H1 (cell line): ENCODE measurements at regions of chr12 and their contacts with region 1.

Region 1: DNA sequence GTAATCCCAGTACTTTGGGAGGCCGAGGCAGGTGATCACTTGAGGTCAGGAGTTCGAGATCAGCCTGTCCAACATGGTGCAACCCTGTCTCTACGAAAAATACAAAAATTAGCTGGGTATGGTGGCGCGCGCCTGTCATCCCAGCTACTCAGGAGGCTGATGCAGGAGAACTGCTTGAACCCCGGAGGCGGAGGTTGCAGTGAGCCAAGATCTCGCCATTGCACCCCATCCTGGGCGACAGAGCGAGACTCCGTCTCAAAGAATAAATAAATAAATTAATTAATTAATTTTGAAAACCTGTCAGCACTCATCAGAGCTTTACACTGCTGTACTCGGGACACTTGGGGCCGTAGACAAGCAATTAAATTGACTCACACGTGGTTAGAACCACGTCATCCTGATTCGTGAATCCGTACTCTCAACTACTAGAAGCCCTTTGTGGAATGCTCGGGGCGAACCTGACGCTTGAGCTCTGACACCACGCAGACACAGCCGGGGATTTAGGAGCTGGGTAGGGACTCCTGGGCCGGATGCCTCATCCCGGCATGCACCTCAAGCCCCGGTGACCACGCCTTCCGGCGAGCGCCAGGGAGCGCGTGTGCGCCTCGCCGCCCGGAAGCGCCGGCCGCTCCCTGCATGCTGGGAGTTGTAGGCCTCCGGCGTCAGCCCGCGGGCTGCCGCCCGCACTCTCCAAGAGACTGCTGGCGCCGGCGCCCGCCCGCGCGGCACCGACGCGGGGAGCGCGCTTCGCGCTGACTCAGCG is at the start of gene XPOT:
- DNase-seq: peak; percentile 87 to 95
- H3K4me3 ChIP-seq: peak within 1 kb of the TSS; percentile 73 to 96 (median 89)
- H3K27ac ChIP-seq: peak within 1 kb of the TSS; percentile 94
- H3K4me1 ChIP-seq: peaks cover 0 to 5% (median 3%) of the 10 kb centered on the region in 4 experiments; a peak in 3 of 7 replicates
- H3K27me3 ChIP-seq: no peaks in the 10 kb centered on the region
- CTCF ChIP-seq: no peak
- EP300 ChIP-seq: no peak
- POLR2A ChIP-seq: peak in 1 of 2 experiments; percentile 60; a peak in 1 of 3 replicates
- RAD21 ChIP-seq: no peak
- total RNA-seq, gene XPOT: 160 and 176 TPM in 2 replicates

Region 2: GRCh38 chr12:63264629-63265028 is 1139.3 kb before region 1 on chr12:
- CTCF ChIA-PET with region 1: no interaction called
- POLR2A ChIA-PET with region 1: no interaction called
- DNase-seq: no peak
- H3K4me3 ChIP-seq: no peak overlapping the region
- H3K27ac ChIP-seq: no peak overlapping the region
- H3K4me1 ChIP-seq: no peaks in the 10 kb centered on the region
- H3K27me3 ChIP-seq: peaks cover 0 to 1% (median 0%) of the 10 kb centered on the region in 4 experiments; a peak in 1 of 7 replicates
- CTCF ChIP-seq: no peak
- EP300 ChIP-seq: no peak
- POLR2A ChIP-seq: no peak
- RAD21 ChIP-seq: no peak

Region 3: GRCh38 chr12:64392221-64392620 is 11.7 kb before region 1 on chr12:
- CTCF ChIA-PET with region 1: interaction called, 6 read pairs
- POLR2A ChIA-PET with region 1: interaction called, 10 read pairs
- DNase-seq: no peak
- H3K4me3 ChIP-seq: no peak overlapping the region
- H3K27ac ChIP-seq: no peak overlapping the region
- H3K4me1 ChIP-seq: peaks cover 0 to 2% (median 0%) of the 10 kb centered on the region in 4 experiments; a peak in 3 of 7 replicates
- H3K27me3 ChIP-seq: peaks cover 0 to 8% (median 2%) of the 10 kb centered on the region in 4 experiments; a peak in 5 of 7 replicates
- CTCF ChIP-seq: peak in 2 of 3 experiments; percentile 16 to 28; a peak in 2 of 4 replicates
- EP300 ChIP-seq: no peak
- POLR2A ChIP-seq: no peak
- RAD21 ChIP-seq: peak; percentile 27 to 44; a peak in 3 of 4 replicates

Region 4: GRCh38 chr12:64419696-64420095 is 15.8 kb after region 1 on chr12:
- CTCF ChIA-PET with region 1: interaction called, 3 read pairs
- POLR2A ChIA-PET with region 1: interaction called, 100 read pairs
- DNase-seq: no peak
- H3K4me3 ChIP-seq: no peak overlapping the region
- H3K27ac ChIP-seq: no peak overlapping the region
- H3K4me1 ChIP-seq: no peaks in the 10 kb centered on the region
- H3K27me3 ChIP-seq: no peaks in the 10 kb centered on the region
- CTCF ChIP-seq: no peak
- EP300 ChIP-seq: no peak
- POLR2A ChIP-seq: no peak
- RAD21 ChIP-seq: no peak

Region 5: GRCh38 chr12:64431791-64432190 is 27.9 kb after region 1 on chr12:
- CTCF ChIA-PET with region 1: interaction called, 3 read pairs
- POLR2A ChIA-PET with region 1: interaction called, 100 read pairs
- DNase-seq: no peak
- H3K4me3 ChIP-seq: no peak overlapping the region
- H3K27ac ChIP-seq: no peak overlapping the region
- H3K4me1 ChIP-seq: no peaks in the 10 kb centered on the region
- H3K27me3 ChIP-seq: no peaks in the 10 kb centered on the region
- CTCF ChIP-seq: no peak
- EP300 ChIP-seq: no peak
- POLR2A ChIP-seq: no peak
- RAD21 ChIP-seq: no peak

Region 6: DNA sequence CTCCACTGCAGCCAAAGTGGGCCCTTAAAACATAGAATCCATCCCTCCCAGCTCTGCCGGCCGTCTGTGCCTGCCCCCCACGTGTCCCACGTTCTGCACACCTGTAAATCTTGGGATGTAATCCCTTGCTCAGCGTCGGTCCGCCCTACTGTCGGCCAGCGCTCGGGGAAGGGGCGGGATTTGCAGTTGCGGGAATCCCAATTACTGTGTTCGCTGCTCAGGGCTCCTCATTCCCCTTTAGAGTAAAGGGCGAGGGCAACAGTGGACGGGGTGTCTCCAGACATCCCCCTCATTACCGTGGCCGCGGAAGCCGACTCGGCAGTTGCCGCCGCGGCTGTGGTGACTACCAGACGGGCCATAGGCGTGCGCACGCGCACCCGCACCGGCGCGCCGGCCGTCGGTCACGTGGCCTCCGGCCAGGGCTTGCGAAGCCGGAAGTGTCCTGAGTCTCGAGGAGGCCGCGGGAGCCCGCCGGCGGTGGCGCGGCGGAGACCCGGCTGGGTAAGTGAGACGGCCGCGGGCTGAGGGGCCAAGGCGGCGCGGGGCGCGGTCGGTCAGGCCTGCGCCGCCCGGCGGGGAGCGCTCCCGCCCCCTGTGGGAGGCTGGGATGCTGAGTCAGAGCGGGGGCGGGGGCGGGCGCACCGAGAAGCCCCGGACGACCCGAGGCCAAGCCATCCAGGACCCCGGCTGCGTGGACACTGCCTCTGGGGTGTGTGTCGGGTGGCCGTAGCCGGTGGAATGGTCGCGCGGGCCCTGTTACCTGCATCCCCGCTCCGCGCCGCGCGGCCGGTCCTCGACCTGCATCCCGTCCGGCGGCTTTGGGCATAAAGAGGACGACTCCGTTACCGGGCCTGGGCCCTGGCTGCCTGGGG is 48.0 kb after region 1 on chr12 and contains the start of gene TBK1:
- CTCF ChIA-PET with region 1: no interaction called
- POLR2A ChIA-PET with region 1: interaction called, 21 read pairs
- DNase-seq: peak; percentile 53 to 95
- H3K4me3 ChIP-seq: peak within 1 kb of the TSS; percentile 75 to 91 (median 88)
- H3K27ac ChIP-seq: peak within 1 kb of the TSS; percentile 65
- H3K4me1 ChIP-seq: peaks cover 0 to 10% (median 3%) of the 10 kb centered on the region in 4 experiments; a peak in 2 of 7 replicates
- H3K27me3 ChIP-seq: no peaks in the 10 kb centered on the region
- CTCF ChIP-seq: 0 out of 4 replicates have a peak, but pooled peaks of 1 of the 3 experiments have one; percentile 0
- EP300 ChIP-seq: no peak
- POLR2A ChIP-seq: peak; percentile 50 to 70; a peak in 2 of 3 replicates
- RAD21 ChIP-seq: no peak
- total RNA-seq, gene TBK1: 19.2 and 20.4 TPM in 2 replicates